B cell (primary cell): ENCODE measurements at regions of chr6 and their contacts with region 1.

Region 1: DNA sequence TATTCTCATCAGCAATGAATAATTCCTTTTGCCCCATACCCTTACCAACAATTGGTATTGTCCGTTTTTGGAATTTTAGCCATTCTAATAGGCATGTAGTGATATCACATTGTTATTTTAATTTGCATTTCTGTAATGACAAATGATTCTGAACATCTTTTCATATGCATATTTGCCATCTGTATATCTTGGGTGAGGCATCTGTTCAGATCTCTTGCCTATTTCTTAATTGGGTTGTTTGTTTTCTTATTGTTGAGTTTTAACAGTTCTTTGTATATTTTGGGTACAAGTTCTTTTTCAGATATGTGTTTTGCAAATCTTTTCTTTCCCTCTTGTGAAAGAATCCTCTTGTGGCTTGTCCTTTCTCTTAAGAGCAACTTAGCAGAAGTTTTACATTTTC is 69.6 kb downstream of the ZNF292 start:
- DNase-seq: no peak
- ATAC-seq: no peak
- H3K4me3 ChIP-seq: no peak overlapping the region
- H3K4me3 Mint-ChIP-seq: no peak overlapping the region
- H3K27ac ChIP-seq: no peak overlapping the region
- H3K27ac Mint-ChIP-seq: no peak overlapping the region
- H3K4me1 ChIP-seq: no peaks in the 10 kb centered on the region
- H3K4me1 Mint-ChIP-seq: no peaks in the 10 kb centered on the region
- H3K27me3 ChIP-seq: no peaks in the 10 kb centered on the region
- H3K27me3 Mint-ChIP-seq: no peaks in the 10 kb centered on the region
- CTCF ChIP-seq: no peak

Region 2: GRCh38 chr6:87040729-87041128 is 184.2 kb before region 1 on chr6:
- CTCF ChIA-PET with region 1: no interaction called
- POLR2A ChIA-PET with region 1: no interaction called
- intact Hi-C with region 1: no loop called
- DNase-seq: no peak
- ATAC-seq: no peak
- H3K4me3 ChIP-seq: no peak overlapping the region
- H3K4me3 Mint-ChIP-seq: no peak overlapping the region
- H3K27ac ChIP-seq: no peak overlapping the region
- H3K27ac Mint-ChIP-seq: no peak overlapping the region
- H3K4me1 ChIP-seq: no peaks in the 10 kb centered on the region
- H3K4me1 Mint-ChIP-seq: no peaks in the 10 kb centered on the region
- H3K27me3 ChIP-seq: peaks cover 0 to 4% (median 2%) of the 10 kb centered on the region in 4 experiments
- H3K27me3 Mint-ChIP-seq: peaks cover 21% of the 10 kb centered on the region
- CTCF ChIP-seq: no peak

Region 3: DNA sequence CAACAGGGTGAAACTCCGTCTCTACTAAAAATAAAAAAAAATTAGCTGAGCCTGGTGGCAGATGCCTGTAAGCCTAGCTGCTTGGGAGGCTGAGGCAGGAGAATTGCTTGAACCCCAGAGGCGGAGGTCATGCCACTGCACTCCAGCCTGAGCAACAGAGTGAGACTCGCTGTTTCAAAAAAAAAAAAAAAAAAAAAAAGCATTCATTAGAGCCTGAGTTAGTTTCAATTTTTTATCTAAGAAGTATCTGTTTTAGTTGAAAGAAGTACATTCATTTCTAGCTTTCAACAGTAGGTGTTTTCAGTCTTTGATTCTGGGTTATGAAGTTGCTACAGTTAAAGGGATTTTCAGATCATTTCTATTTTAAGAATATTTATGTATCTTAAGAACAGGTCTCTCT is 27.4 kb before region 1 on chr6:
- CTCF ChIA-PET with region 1: no interaction called
- POLR2A ChIA-PET with region 1: no interaction called
- intact Hi-C with region 1: loop called (anchors 5 kb)
- DNase-seq: no peak
- ATAC-seq: no peak
- H3K4me3 ChIP-seq: no peak overlapping the region
- H3K4me3 Mint-ChIP-seq: no peak overlapping the region
- H3K27ac ChIP-seq: no peak overlapping the region
- H3K27ac Mint-ChIP-seq: no peak overlapping the region
- H3K4me1 ChIP-seq: peaks cover 0 to 3% of the 10 kb centered on the region in 2 donors
- H3K4me1 Mint-ChIP-seq: peaks cover 55% of the 10 kb centered on the region
- H3K27me3 ChIP-seq: no peaks in the 10 kb centered on the region
- H3K27me3 Mint-ChIP-seq: no peaks in the 10 kb centered on the region
- CTCF ChIP-seq: no peak